ENCODE measurements at regions of chr5 and their contacts with region 1.

Region 1: GRCh38 chr5:119743927-119744326 is 114.6 kb downstream of the FAM170A start:
- DNase-seq: peak; percentile 50
- H3K4me3 ChIP-seq: no peak overlapping the region
- H3K27ac ChIP-seq: no peak overlapping the region
- H3K4me1 ChIP-seq: no peaks in the 10 kb centered on the region
- CTCF ChIP-seq: peak; percentile 82

Region 2: GRCh38 chr5:119255571-119256356 is 488.2 kb before region 1 on chr5:
- CTCF ChIA-PET with region 1: no interaction called
- POLR2A ChIA-PET with region 1: no interaction called
- intact Hi-C with region 1: loop called (anchors 10 kb)
- DNase-seq: peak; percentile 54
- H3K4me3 ChIP-seq: no peak overlapping the region
- H3K27ac ChIP-seq: no peak overlapping the region
- H3K4me1 ChIP-seq: no peaks in the 10 kb centered on the region
- CTCF ChIP-seq: peak; percentile 74

Region 3: GRCh38 chr5:119470851-119471451 is 273.0 kb before region 1 on chr5:
- CTCF ChIA-PET with region 1: no interaction called
- POLR2A ChIA-PET with region 1: no interaction called
- intact Hi-C with region 1: loop called (anchors 5 kb)
- DNase-seq: peak; percentile 40
- H3K4me3 ChIP-seq: no peak overlapping the region
- H3K27ac ChIP-seq: no peak overlapping the region
- H3K4me1 ChIP-seq: no peaks in the 10 kb centered on the region
- CTCF ChIP-seq: peak; percentile 90

Region 4: GRCh38 chr5:119578937-119579336 is 165.0 kb before region 1 on chr5:
- CTCF ChIA-PET with region 1: no interaction called
- POLR2A ChIA-PET with region 1: no interaction called
- intact Hi-C with region 1: loop called (anchors 10 kb)
- DNase-seq: peak; percentile 58
- H3K4me3 ChIP-seq: no peak overlapping the region
- H3K27ac ChIP-seq: no peak overlapping the region
- H3K4me1 ChIP-seq: no peaks in the 10 kb centered on the region
- CTCF ChIP-seq: peak; percentile 75